Activated CD4-positive, alpha-beta memory T cell treated with anti-CD3 and anti-CD28 coated beads for 36 hours (primary cell): ENCODE measurements at regions of chr16 and their contacts with region 1.

Region 1: DNA sequence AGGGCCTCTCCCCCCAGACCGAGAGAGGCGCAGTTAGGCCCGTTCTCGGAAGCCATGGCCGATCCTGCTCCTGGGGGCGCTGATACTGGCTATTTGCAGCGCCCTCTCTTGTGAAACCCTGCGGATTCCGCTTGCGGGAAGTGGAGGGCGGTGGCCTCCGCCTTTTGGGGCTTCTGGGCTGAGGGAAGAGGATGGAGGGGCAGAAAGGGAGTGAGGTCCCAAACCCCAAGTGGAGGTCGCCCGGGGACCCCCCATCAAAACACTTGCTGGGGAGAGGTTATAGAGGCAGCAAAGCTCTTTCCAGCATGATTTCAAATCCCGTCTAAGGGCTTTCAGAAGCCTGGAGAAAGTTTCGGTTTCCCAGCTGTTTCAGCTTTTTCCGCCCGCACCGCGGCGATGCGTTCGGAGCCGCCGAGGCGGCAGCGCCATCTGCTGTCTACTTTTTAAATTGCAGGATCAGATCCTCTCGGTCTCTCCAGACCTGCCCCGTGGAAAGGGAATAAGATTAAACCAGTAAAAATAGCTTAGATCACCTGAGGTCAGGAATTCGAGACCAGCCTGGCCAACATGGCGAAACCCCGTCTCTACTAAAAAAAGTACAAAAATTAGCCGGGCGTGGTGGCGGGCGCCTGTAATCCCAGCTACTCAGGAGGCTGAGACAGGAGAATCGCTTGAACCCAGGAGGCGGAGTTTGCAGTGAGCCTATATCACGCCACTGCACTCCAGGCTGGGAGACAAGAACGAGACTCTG is 15.8 kb downstream of the SNX20 start:
- DNase-seq: peak; percentile 87
- H3K4me3 Mint-ChIP-seq: peak overlapping the region; percentile 63
- H3K27ac Mint-ChIP-seq: peak overlapping the region; percentile 33
- H3K4me1 Mint-ChIP-seq: peaks cover 39% of the 10 kb centered on the region
- H3K27me3 Mint-ChIP-seq: no peaks in the 10 kb centered on the region

Region 2: GRCh38 chr16:50024684-50025536 is 640.4 kb before region 1 on chr16 and contains the start of gene CNEP1R1:
- CTCF ChIA-PET with region 1: interaction called, 32 read pairs
- POLR2A ChIA-PET with region 1: no interaction called
- intact Hi-C with region 1: no loop called
- DNase-seq: peak; percentile 96
- H3K4me3 Mint-ChIP-seq: peak within 1 kb of the TSS; percentile 91
- H3K27ac Mint-ChIP-seq: peak within 1 kb of the TSS; percentile 83
- H3K4me1 Mint-ChIP-seq: peaks cover 19% of the 10 kb centered on the region
- H3K27me3 Mint-ChIP-seq: no peaks in the 10 kb centered on the region
- total RNA-seq, gene CNEP1R1: 23.9 to 24.5 TPM

Region 3: DNA sequence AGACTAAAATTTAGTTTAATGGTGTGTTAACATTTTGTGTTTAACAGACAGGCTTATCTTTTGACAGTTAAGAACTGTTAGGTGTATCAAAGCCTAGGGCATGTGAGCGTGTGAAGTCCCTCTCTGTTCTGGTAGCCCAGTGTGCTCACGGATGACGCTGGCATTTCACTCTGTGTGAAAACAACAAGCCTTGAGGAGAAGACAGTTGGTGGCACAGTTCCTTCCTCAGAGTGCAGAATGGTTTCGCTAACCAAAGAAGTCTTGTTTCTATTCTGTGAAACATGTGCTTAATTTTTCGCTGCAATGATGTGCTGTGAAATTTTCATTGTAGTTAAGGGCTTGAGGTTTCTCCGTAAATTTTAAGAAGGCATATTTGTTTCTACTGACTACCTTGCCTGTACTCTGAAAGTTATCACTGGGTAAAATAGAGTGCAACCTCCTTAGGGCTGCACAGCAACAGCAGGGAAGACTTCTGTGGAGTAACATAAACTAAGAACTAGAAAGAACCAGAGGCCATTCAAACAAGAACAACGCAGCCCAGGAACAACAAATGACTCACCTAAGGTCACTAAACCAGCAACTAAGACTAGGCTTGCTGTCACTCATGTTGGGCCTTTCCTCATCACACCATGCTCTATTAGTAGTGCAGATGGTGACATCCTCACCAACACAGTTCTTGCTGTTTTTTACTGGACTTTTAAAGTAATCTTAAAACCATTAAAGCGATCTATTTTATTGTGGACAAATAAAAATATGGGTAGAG is 329.9 kb before region 1 on chr16:
- CTCF ChIA-PET with region 1: interaction called, 4 read pairs
- POLR2A ChIA-PET with region 1: no interaction called
- intact Hi-C with region 1: loop called (anchors 5 kb)
- DNase-seq: peak; percentile 70
- H3K4me3 Mint-ChIP-seq: peak overlapping the region; percentile 32
- H3K27ac Mint-ChIP-seq: peak overlapping the region; percentile 90
- H3K4me1 Mint-ChIP-seq: peaks cover 68% of the 10 kb centered on the region
- H3K27me3 Mint-ChIP-seq: no peaks in the 10 kb centered on the region

Region 4: DNA sequence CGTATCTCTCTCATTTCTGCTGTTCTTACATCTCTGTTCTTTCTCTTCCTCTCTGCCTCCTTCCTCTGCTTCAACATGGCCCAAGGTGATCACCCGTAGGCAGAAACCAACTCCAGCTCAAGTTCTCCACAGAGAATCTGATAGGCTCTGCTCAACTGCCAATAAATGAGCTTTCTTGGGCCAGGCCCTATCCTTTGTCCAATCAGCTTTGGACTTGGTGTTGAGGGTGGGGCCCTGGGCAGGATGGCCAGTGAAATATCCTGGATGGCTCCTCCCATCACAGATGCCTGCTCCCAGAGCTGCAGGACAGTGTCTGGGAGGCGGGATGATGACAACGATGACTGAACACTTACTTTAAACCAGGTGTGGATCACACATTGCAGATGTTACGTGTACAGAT is 279.2 kb before region 1 on chr16:
- CTCF ChIA-PET with region 1: no interaction called
- POLR2A ChIA-PET with region 1: no interaction called
- intact Hi-C with region 1: no loop called
- DNase-seq: no peak
- H3K4me3 Mint-ChIP-seq: no peak overlapping the region
- H3K27ac Mint-ChIP-seq: no peak overlapping the region
- H3K4me1 Mint-ChIP-seq: no peaks in the 10 kb centered on the region
- H3K27me3 Mint-ChIP-seq: peaks cover 2% of the 10 kb centered on the region

Region 5: GRCh38 chr16:50548125-50548908 is 117.0 kb before region 1 on chr16 and contains the start of gene NKD1:
- CTCF ChIA-PET with region 1: interaction called, 8 read pairs
- POLR2A ChIA-PET with region 1: interaction called, 3 read pairs
- intact Hi-C with region 1: loop called (anchors 5 kb)
- DNase-seq: peak; percentile 80
- H3K4me3 Mint-ChIP-seq: peak within 1 kb of the TSS; percentile 84
- H3K27ac Mint-ChIP-seq: peak within 1 kb of the TSS; percentile 9
- H3K4me1 Mint-ChIP-seq: peaks cover 7% of the 10 kb centered on the region
- H3K27me3 Mint-ChIP-seq: no peaks in the 10 kb centered on the region
- total RNA-seq, gene NKD1: 0.67 to 1.6 TPM

Region 6: DNA sequence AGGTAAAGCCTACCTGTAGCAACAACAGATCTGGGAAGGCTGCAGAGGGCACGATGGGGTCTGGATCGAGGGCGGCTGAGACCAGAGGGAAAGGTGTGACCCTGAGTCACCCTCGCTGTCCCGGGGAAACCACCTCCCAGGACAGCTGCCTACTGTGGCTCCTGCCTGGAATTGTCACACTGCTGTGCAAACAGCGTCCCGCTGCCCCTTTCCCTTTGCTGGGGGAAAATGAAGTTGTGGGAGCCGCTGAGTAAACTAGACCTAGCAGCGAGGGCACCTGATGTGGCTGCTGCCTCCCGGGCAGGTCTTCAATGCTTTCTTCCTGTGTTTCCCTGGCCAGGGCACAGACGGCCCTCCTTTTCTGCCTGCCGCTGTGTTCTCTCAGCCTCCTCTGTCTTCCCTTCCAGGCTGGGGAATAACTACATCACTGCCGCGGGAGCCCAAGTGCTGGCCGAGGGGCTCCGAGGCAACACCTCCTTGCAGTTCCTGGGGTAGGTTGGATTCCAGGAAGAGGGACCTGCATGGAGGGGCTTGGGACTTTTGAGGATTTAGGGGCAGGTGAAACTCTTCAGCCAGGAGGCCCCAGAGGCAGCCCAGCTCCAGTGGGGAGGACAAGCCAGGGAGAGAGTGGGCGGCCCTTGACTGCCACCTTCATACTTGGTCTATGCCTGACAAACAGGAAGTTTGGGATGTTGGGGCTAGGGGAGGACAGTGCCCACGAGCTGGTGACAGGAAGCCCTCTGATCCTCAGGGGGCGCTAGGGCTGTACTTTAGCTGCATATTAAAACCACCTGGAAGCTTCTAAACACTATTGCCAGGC is 54.4 kb after region 1 on chr16:
- CTCF ChIA-PET with region 1: interaction called, 17 read pairs
- POLR2A ChIA-PET with region 1: no interaction called
- intact Hi-C with region 1: no loop called
- DNase-seq: peak; percentile 31
- H3K4me3 Mint-ChIP-seq: no peak overlapping the region
- H3K27ac Mint-ChIP-seq: peak overlapping the region; percentile 51
- H3K4me1 Mint-ChIP-seq: peaks cover 41% of the 10 kb centered on the region
- H3K27me3 Mint-ChIP-seq: no peaks in the 10 kb centered on the region

Region 7: GRCh38 chr16:50776037-50776436 is 110.7 kb after region 1 on chr16:
- CTCF ChIA-PET with region 1: interaction called, 10 read pairs
- POLR2A ChIA-PET with region 1: no interaction called
- intact Hi-C with region 1: no loop called
- DNase-seq: no peak
- H3K4me3 Mint-ChIP-seq: no peak overlapping the region
- H3K27ac Mint-ChIP-seq: no peak overlapping the region
- H3K4me1 Mint-ChIP-seq: peaks cover 78% of the 10 kb centered on the region
- H3K27me3 Mint-ChIP-seq: no peaks in the 10 kb centered on the region